ENCODE measurements at regions of chr5 and their contacts with region 1.

Region 1: DNA sequence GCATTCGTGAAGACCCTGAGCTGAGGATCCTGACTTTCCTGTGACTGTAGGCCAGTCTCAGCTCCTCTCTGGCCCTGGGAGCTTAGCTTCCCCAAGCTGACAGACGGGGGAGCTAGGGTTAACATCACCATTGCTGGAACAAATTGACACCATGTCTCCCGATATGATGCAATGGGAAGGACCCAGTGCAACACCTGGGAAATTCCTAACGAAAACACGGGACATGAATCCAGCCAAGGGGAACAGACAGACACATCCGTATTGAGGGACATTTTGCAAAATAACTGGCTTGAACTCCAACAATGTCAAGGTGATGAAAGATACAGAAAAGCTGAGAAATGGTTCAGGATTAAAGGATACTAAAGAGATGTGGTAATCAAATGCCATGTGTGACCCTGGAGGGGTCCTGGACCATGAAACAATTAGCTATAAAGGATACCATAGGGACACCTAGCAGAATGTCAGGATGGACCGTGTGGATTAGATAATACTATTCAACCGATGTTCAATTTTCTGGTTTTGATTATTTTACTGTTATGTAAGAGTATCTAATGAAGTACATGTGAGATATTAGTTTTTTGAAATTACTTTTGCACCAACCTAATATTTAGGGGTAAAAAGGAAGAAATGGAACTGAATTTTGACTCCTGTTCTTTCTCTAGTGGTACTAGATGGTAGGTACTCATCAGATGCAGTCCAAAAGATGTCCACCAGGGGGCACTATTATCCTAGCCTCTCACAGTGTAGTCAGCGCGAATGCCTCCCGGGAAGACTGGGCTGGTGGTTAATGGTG is 52.7 kb downstream of the NDST1 start:
- DNase-seq: peak; percentile 84
- CTCF ChIP-seq: peak; percentile 70

Region 2: GRCh38 chr5:150656191-150657132 is 95.9 kb after region 1 on chr5:
- in situ Hi-C with region 1: loop called (anchors 5 kb)
- DNase-seq: peak; percentile 93
- CTCF ChIP-seq: peak; percentile 78

Region 3: GRCh38 chr5:150801117-150801927 is 240.7 kb after region 1 on chr5:
- in situ Hi-C with region 1: loop called (anchors 25 kb)
- DNase-seq: peak; percentile 55
- CTCF ChIP-seq: peak; percentile 42

Measured in GM13976 (cell line).